ENCODE measurements at regions of chr18 and their contacts with region 1.

Region 1: GRCh38 chr18:23259701-23260582 is 124.7 kb downstream of the CABLES1 start:
- DNase-seq: peak; percentile 89
- ATAC-seq: peak; percentile 85
- H3K4me3 ChIP-seq: peak overlapping the region; percentile 48; the same call in 1 of the 2 replicates
- H3K27ac ChIP-seq: peak overlapping the region; percentile 95
- H3K4me1 ChIP-seq: peaks cover 42% of the 10 kb centered on the region
- H3K27me3 ChIP-seq: no peaks in the 10 kb centered on the region
- CTCF ChIP-seq: no peak

Region 2: GRCh38 chr18:23148403-23148802 is 111.5 kb before region 1 on chr18:
- CTCF ChIA-PET with region 1: interaction called, 12 read pairs
- POLR2A ChIA-PET with region 1: no interaction called
- intact Hi-C with region 1: no loop called
- DNase-seq: no peak
- ATAC-seq: no peak
- H3K4me3 ChIP-seq: no peak overlapping the region
- H3K27ac ChIP-seq: no peak overlapping the region
- H3K4me1 ChIP-seq: peaks cover 10% of the 10 kb centered on the region
- H3K27me3 ChIP-seq: no peaks in the 10 kb centered on the region
- CTCF ChIP-seq: no peak

Region 3: GRCh38 chr18:23231340-23232021 is 28.5 kb before region 1 on chr18:
- CTCF ChIA-PET with region 1: no interaction called
- POLR2A ChIA-PET with region 1: no interaction called
- intact Hi-C with region 1: loop called (anchors 2 kb)
- DNase-seq: peak; percentile 92
- ATAC-seq: peak; percentile 77
- H3K4me3 ChIP-seq: no peak overlapping the region
- H3K27ac ChIP-seq: peak overlapping the region; percentile 79
- H3K4me1 ChIP-seq: peaks cover 38% of the 10 kb centered on the region
- H3K27me3 ChIP-seq: no peaks in the 10 kb centered on the region
- CTCF ChIP-seq: no peak

Region 4: GRCh38 chr18:23283916-23284430 is 24.0 kb after region 1 on chr18:
- CTCF ChIA-PET with region 1: no interaction called
- POLR2A ChIA-PET with region 1: interaction called, 5 read pairs
- intact Hi-C with region 1: loop called (anchors 1 kb)
- DNase-seq: peak; percentile 92
- ATAC-seq: peak; percentile 68
- H3K4me3 ChIP-seq: no peak overlapping the region; the same call in 1 of the 2 replicates
- H3K27ac ChIP-seq: peak overlapping the region; percentile 93
- H3K4me1 ChIP-seq: peaks cover 49% of the 10 kb centered on the region
- H3K27me3 ChIP-seq: no peaks in the 10 kb centered on the region
- CTCF ChIP-seq: no peak

Region 5: GRCh38 chr18:23307567-23308295 is 47.8 kb after region 1 on chr18:
- CTCF ChIA-PET with region 1: interaction called, 5 read pairs
- POLR2A ChIA-PET with region 1: no interaction called
- intact Hi-C with region 1: loop called (anchors 1 kb)
- DNase-seq: peak; percentile 32
- ATAC-seq: peak; percentile 16; the same call in 1 of the 2 replicates
- H3K4me3 ChIP-seq: no peak overlapping the region
- H3K27ac ChIP-seq: no peak overlapping the region
- H3K4me1 ChIP-seq: peaks cover 28% of the 10 kb centered on the region
- H3K27me3 ChIP-seq: no peaks in the 10 kb centered on the region
- CTCF ChIP-seq: no peak

Region 6: DNA sequence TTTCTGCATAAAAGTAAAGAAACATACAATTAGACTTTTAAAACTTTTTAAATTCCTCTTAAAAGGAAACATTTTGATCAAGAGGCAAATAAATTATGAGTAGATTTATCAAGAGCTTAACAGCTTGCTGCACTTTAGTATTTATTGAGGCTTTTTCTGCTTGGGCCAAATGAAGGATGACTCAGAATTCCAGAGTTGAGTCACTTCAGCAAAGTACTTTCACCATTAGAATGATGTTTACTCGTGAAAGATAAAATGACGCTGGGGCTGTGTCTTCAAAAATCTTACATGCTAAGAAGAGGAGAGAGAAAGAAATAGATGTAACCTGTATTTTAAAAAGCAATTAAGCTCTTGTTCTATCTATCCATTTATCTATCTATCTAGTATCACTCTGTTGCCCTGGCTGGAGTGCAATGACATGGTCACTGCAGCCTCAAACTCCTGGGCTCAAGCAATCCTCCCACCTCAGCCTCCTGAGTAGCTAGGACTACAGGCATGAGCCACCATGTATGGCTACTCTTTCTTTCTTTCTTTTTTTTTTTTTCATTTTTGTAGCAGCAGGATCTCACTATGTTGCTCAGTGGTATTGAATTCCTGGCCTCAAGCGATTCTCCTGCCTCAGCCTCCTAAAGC is 117.8 kb after region 1 on chr18:
- CTCF ChIA-PET with region 1: interaction called, 8 read pairs
- POLR2A ChIA-PET with region 1: no interaction called
- intact Hi-C with region 1: loop called (anchors 1 kb)
- DNase-seq: peak; percentile 89
- ATAC-seq: peak; percentile 65
- H3K4me3 ChIP-seq: peak overlapping the region; percentile 29; the same call in 1 of the 2 replicates
- H3K27ac ChIP-seq: peak overlapping the region; percentile 86
- H3K4me1 ChIP-seq: peaks cover 38% of the 10 kb centered on the region
- H3K27me3 ChIP-seq: no peaks in the 10 kb centered on the region
- CTCF ChIP-seq: no peak